ENCODE measurements at regions of chr7 and their contacts with region 1.

Region 1: GRCh38 chr7:15821484-15822427 is 135.3 kb upstream of the MEOX2 start:
- DNase-seq: no peak
- H3K4me3 ChIP-seq: no peak overlapping the region
- H3K27ac ChIP-seq: no peak overlapping the region
- H3K4me1 ChIP-seq: peaks cover 2% of the 10 kb centered on the region
- H3K27me3 ChIP-seq: no peaks in the 10 kb centered on the region
- CTCF ChIP-seq: no peak
- EP300 ChIP-seq: peak; percentile 24
- POLR2A ChIP-seq: no peak

Region 2: GRCh38 chr7:15686295-15686956 is 135.3 kb before region 1 on chr7 and contains the start of gene MEOX2:
- intact Hi-C with region 1: loop called in 1 of 4 experiments (anchors 10 kb)
- DNase-seq: peak; percentile 35 to 78 (median 59)
- H3K4me3 ChIP-seq: peak within 1 kb of the TSS; percentile 42
- H3K27ac ChIP-seq: peak within 1 kb of the TSS in 1 of 2 donors; percentile 35
- H3K4me1 ChIP-seq: peaks cover 4% of the 10 kb centered on the region
- H3K27me3 ChIP-seq: no peaks in the 10 kb centered on the region
- CTCF ChIP-seq: no peak
- EP300 ChIP-seq: no peak
- POLR2A ChIP-seq: no peak
- total RNA-seq, gene MEOX2: 1.3 to 3.6 (median 1.5) TPM